ENCODE measurements at regions of chr1 and their contacts with region 1.

Region 1: DNA sequence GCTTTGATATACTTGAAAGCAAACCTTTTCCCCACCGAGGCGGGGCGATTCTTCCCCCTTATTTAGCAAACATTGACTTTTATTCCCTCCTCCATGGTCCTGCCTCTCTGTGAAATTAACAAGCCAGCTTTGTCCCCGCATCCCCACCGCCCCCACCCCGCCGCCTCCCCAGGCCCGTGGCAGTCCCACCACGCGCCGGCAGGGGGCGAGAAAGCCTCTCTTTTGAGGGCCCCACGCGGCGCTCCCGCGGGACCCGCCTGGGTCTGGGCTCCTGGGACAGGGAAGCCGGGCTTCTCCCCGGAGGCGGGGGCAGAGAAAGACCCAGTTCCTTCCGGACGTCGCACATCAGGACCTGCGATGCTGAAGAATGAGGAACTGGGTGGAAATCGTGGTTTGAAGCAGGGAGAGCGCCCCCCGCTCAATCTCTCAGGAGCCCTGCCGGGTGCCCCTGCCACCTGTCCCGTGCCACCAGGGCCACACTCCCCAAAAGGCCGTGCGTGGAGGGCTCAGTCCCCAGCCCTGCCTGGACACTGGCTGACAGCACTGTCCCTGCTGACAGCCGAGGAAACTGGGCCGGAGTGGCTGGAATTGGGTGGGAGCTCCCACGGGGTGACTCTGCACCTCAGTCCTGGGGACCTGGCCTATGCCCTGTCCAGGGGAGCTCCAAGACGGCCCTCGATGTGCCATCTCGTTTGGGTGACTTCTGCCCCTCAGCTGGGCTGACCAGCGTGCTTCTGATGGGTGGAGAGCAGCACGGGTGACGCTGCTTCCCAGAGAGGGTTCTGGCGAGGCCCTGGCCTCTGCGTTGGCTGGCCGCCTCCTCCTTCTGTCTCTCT is 8.6 kb upstream of the ACTRT2 start:
- DNase-seq: peak; percentile 31 to 81 (median 70)
- H3K4me3 ChIP-seq: no peak overlapping the region
- H3K27ac ChIP-seq: no peak overlapping the region
- H3K4me1 ChIP-seq: no peaks in the 10 kb centered on the region
- H3K27me3 ChIP-seq: no peaks in the 10 kb centered on the region
- CTCF ChIP-seq: peak; percentile 38 to 73 (median 58)
- EP300 ChIP-seq: no peak
- POLR2A ChIP-seq: no peak

Region 2: GRCh38 chr1:2459757-2460156 is 552.9 kb before region 1 on chr1:
- intact Hi-C with region 1: loop called in 1 of 4 experiments (anchors 5 kb)
- DNase-seq: peak in 4 of 5 donors; percentile 22 to 48 (median 38)
- H3K4me3 ChIP-seq: no peak overlapping the region
- H3K27ac ChIP-seq: no peak overlapping the region
- H3K4me1 ChIP-seq: no peaks in the 10 kb centered on the region
- H3K27me3 ChIP-seq: no peaks in the 10 kb centered on the region
- CTCF ChIP-seq: no peak
- EP300 ChIP-seq: no peak
- POLR2A ChIP-seq: no peak

Region 3: GRCh38 chr1:3237994-3238702 is 225.5 kb after region 1 on chr1:
- intact Hi-C with region 1: no loop called
- DNase-seq: no peak
- H3K4me3 ChIP-seq: no peak overlapping the region
- H3K27ac ChIP-seq: no peak overlapping the region
- H3K4me1 ChIP-seq: peaks cover 2% of the 10 kb centered on the region
- H3K27me3 ChIP-seq: no peaks in the 10 kb centered on the region
- CTCF ChIP-seq: no peak
- EP300 ChIP-seq: no peak
- POLR2A ChIP-seq: no peak

Region 4: GRCh38 chr1:3283849-3284248 is 271.2 kb after region 1 on chr1:
- intact Hi-C with region 1: loop called (anchors 1 to 10 kb)
- DNase-seq: peak; percentile 56 to 77 (median 72)
- H3K4me3 ChIP-seq: no peak overlapping the region
- H3K27ac ChIP-seq: no peak overlapping the region
- H3K4me1 ChIP-seq: peaks cover 5% of the 10 kb centered on the region
- H3K27me3 ChIP-seq: no peaks in the 10 kb centered on the region
- CTCF ChIP-seq: peak; percentile 67 to 76 (median 68)
- EP300 ChIP-seq: no peak
- POLR2A ChIP-seq: no peak

Region 5: DNA sequence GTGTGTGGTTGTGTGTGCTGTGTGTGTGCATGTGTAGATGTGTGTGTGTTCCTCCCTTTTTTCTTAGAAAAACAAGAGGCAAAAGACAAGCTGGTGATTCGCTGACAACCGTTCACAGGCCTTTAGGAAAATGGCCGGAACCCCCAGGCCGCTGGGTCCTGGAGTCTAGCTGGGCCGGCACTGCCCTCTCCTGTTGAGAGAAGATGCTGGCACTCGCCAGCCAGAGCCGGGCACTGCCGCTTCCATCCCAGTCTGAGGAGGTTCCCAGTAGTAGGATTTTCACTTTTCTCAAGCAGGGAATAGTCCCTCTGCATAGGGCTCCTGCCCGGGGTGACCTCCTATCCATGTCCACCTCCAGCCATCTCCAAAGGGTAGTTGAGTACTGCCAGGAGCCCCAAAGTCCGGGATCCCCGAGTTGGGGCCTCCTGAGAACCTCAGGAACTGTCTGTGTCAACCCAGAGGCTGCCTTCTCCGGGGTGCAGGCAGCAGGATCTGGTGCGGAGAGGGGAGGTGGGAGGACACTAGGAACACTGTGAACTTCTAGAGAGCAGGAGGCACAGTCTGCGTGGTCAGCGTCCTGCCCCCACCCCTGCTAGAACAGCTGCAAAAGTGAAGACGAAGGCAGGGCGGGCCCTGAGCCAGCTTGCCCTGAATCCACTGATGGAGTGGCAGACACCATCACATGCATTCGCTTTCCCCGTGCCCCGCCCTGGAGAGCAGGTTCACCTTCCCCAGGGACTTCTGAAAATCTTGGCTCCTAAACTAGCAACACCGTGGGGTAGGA is 397.7 kb after region 1 on chr1:
- intact Hi-C with region 1: loop called (anchors 5 kb)
- DNase-seq: peak; percentile 58 to 83 (median 70)
- H3K4me3 ChIP-seq: no peak overlapping the region
- H3K27ac ChIP-seq: no peak overlapping the region
- H3K4me1 ChIP-seq: peaks cover 2% of the 10 kb centered on the region
- H3K27me3 ChIP-seq: no peaks in the 10 kb centered on the region
- CTCF ChIP-seq: peak; percentile 27 to 65 (median 50)
- EP300 ChIP-seq: no peak
- POLR2A ChIP-seq: no peak

Region 6: GRCh38 chr1:3417082-3417739 is 404.5 kb after region 1 on chr1:
- intact Hi-C with region 1: loop called (anchors 5 kb)
- DNase-seq: no peak
- H3K4me3 ChIP-seq: no peak overlapping the region
- H3K27ac ChIP-seq: no peak overlapping the region
- H3K4me1 ChIP-seq: no peaks in the 10 kb centered on the region
- H3K27me3 ChIP-seq: no peaks in the 10 kb centered on the region
- CTCF ChIP-seq: no peak
- EP300 ChIP-seq: no peak
- POLR2A ChIP-seq: no peak

Region 7: GRCh38 chr1:3423245-3423829 is 410.7 kb after region 1 on chr1:
- intact Hi-C with region 1: loop called in 3 of 4 experiments (anchors 5 kb)
- DNase-seq: no peak
- H3K4me3 ChIP-seq: no peak overlapping the region
- H3K27ac ChIP-seq: no peak overlapping the region
- H3K4me1 ChIP-seq: no peaks in the 10 kb centered on the region
- H3K27me3 ChIP-seq: no peaks in the 10 kb centered on the region
- CTCF ChIP-seq: no peak
- EP300 ChIP-seq: no peak
- POLR2A ChIP-seq: no peak